HepG2 (cell line): ENCODE measurements at regions of chr14 and their contacts with region 1.

Region 1: DNA sequence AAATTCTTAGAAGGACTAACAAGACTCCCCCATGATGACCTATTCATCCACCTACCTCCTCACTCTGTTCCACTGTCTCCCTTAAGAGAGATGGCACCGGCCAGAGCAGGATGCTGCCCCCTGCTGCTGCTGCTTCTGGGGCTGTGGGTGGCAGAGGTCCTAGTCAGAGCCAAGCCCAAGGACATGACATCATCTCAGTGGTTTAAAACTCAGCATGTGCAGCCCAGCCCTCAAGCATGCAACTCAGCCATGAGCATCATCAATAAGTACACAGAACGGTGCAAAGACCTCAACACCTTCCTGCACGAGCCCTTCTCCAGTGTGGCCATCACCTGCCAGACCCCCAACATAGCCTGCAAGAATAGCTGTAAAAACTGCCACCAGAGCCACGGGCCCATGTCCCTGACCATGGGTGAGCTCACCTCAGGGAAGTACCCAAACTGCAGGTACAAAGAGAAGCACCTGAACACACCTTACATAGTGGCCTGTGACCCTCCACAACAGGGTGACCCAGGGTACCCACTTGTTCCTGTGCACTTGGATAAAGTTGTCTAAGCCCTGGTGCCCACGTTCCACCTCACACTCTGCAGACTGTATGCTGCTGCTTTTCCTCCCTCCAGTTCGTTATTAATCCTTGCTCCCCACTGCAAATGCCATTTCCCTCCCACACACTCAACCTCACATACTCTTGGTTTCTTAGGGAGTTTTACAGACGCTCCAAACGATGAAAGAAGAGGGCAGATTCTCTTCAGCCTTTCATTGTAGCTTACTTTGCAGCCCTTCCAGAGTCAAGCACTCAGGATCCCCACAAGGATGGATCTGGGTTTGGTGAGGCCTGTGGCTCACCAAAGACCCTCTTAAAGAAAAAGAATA is at the start of gene RNASE8:
- DNase-seq: no peak
- ATAC-seq: no peak
- H3K4me3 ChIP-seq: no peak within 1 kb of the TSS; a peak in 1 of 6 replicates
- H3K27ac ChIP-seq: peak within 1 kb of the TSS; percentile 92
- H3K4me1 ChIP-seq: peaks cover 99% of the 10 kb centered on the region
- H3K27me3 ChIP-seq: no peaks in the 10 kb centered on the region
- CTCF ChIP-seq: peak; percentile 56
- EP300 ChIP-seq: no peak
- POLR2A ChIP-seq: no peak
- RAD21 ChIP-seq: no peak
- total RNA-seq, gene RNASE8: not detected in 2 replicates

Region 2: DNA sequence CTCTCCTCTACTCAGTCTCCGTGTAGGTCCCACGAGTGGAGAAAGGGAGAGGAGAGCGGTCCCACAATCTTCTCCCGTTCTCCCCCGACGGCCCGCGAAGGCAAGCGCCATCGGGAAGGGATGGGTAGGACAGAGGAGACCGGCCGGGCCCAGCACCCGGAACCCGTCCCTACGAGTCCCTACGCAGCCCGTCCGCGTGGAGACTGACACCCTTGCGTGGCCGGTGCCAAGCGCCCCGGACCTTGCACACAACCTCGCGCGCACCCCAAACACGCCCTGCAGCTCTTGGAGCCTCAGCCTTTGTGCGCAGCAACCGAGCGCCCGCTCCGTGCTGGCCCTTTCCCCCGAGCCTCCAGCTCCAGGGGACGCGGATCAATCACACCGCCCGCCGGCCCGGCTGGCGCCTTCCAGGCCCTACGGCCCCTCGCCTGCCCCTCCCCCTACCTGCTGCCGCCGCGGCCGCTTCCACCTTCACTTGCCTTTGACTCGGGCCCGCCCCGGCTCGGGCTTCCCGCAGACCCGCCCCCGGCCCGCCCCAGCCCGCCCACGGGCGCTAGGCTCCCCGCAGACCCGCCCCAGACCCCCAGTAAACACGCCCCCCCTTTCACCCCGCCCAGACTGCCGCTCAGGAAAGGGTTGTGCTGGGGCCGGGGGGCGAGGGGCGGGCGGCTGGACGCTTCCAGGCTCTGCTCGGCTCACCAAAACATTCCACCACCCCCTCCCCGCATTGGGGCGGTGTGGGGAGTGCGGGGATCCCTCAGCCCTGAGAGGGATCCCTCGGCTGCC is 33.3 kb before region 1 on chr14 and contains the start of gene NDRG2:
- CTCF ChIA-PET with region 1: no interaction called
- POLR2A ChIA-PET with region 1: interaction called, 10 read pairs
- in situ Hi-C with region 1: no loop called
- intact Hi-C with region 1: loop called (anchors 1 kb)
- DNase-seq: peak; percentile 84
- ATAC-seq: peak; percentile 90
- H3K4me3 ChIP-seq: peak within 1 kb of the TSS; percentile 65 to 96 (median 94)
- H3K27ac ChIP-seq: peak within 1 kb of the TSS; percentile 83
- H3K4me1 ChIP-seq: peaks cover 50% of the 10 kb centered on the region
- H3K27me3 ChIP-seq: no peaks in the 10 kb centered on the region; a peak in 1 of 5 replicates
- CTCF ChIP-seq: peak; percentile 7; the same call in 1 of the 2 replicates
- EP300 ChIP-seq: peak; percentile 41 to 77; a peak in 3 of 4 replicates
- POLR2A ChIP-seq: peak; percentile 78 to 80
- RAD21 ChIP-seq: peak; percentile 58
- total RNA-seq, gene NDRG2: 27.2 and 27.4 TPM in 2 replicates

Region 3: GRCh38 chr14:21098076-21098891 is 40.2 kb after region 1 on chr14 and contains the start of gene ZNF219:
- CTCF ChIA-PET with region 1: interaction called, 6 read pairs
- POLR2A ChIA-PET with region 1: interaction called, 16 read pairs
- in situ Hi-C with region 1: no loop called
- intact Hi-C with region 1: no loop called
- DNase-seq: peak; percentile 74
- ATAC-seq: peak; percentile 57
- H3K4me3 ChIP-seq: peak within 1 kb of the TSS; percentile 67 to 85 (median 83)
- H3K27ac ChIP-seq: peak within 1 kb of the TSS; percentile 70
- H3K4me1 ChIP-seq: peaks cover 82% of the 10 kb centered on the region
- H3K27me3 ChIP-seq: no peaks in the 10 kb centered on the region; a peak in 1 of 5 replicates
- CTCF ChIP-seq: no peak; the same call in 1 of the 2 replicates
- EP300 ChIP-seq: no peak; a peak in 1 of 4 replicates
- POLR2A ChIP-seq: peak in 1 of 2 experiments; percentile 39; a peak in 1 of 4 replicates
- RAD21 ChIP-seq: no peak
- total RNA-seq, gene ZNF219: 21.0 and 36.6 TPM in 2 replicates

Region 4: GRCh38 chr14:21103710-21104447 is 45.8 kb after region 1 on chr14:
- CTCF ChIA-PET with region 1: interaction called, 4 read pairs
- POLR2A ChIA-PET with region 1: interaction called, 16 read pairs
- in situ Hi-C with region 1: no loop called
- intact Hi-C with region 1: no loop called
- DNase-seq: peak; percentile 98
- ATAC-seq: peak; percentile 83
- H3K4me3 ChIP-seq: peak overlapping the region; percentile 61 to 82 (median 66)
- H3K27ac ChIP-seq: peak overlapping the region; percentile 97
- H3K4me1 ChIP-seq: peaks cover 80% of the 10 kb centered on the region
- H3K27me3 ChIP-seq: no peaks in the 10 kb centered on the region; a peak in 1 of 5 replicates
- CTCF ChIP-seq: peak; percentile 95
- EP300 ChIP-seq: peak in 1 of 2 experiments; percentile 76; a peak in 2 of 4 replicates
- POLR2A ChIP-seq: peak in 1 of 2 experiments; percentile 95; a peak in 2 of 4 replicates
- RAD21 ChIP-seq: peak; percentile 74